ENCODE measurements at regions of chr14 and their contacts with region 1.

Region 1: DNA sequence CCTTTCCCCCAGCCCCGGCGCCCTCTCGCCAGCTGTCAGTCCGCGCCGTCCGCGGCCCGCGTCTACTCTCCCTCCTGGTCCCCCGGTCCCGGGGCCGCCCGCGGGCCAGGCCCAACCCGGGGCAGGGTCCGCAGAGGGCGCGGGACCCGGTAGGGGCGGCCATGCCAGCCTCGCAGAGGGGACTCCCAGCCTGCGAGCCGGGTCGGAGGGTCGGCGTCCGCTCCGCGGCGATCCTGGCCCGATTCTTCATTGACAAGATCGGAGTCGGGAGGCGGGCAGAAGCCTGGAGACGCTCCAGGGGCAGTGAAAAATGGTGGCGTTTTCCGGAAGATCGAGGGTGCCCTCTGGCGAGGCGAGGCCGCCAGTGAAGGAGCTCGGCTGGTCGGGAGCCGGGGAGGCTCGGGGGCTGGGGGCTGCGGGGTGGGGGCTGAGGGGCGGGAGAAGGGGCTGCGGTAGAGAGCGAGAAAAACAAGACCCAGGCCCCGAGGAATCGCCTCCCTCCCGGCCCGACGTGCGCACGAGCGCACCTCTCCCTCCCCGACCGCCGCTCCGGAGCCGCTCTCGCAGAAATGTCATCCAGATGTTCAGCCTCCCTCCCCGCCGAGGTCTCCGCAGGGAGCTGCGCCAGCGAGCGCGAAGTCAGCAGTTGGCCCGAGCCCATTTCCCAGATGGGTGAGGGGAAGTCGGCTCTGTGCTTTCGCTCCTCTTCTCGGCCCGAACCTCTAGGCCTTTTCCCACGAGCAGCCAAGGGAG is 647 bp upstream of the TGFB3 start:
- DNase-seq: peak; percentile 86 to 93
- ATAC-seq: peak; percentile 76 to 79 (median 76)
- H3K4me3 ChIP-seq: peak overlapping the region; percentile 79
- H3K27ac ChIP-seq: peak overlapping the region; percentile 98
- H3K4me1 ChIP-seq: peaks cover 25% of the 10 kb centered on the region
- H3K27me3 ChIP-seq: no peaks in the 10 kb centered on the region
- CTCF ChIP-seq: peak; percentile 56

Region 2: GRCh38 chr14:75188520-75189268 is 793.7 kb before region 1 on chr14:
- intact Hi-C with region 1: no loop called
- DNase-seq: no peak
- ATAC-seq: peak in 1 of 4 donors; percentile 33
- H3K4me3 ChIP-seq: no peak overlapping the region
- H3K27ac ChIP-seq: no peak overlapping the region
- H3K4me1 ChIP-seq: no peaks in the 10 kb centered on the region
- H3K27me3 ChIP-seq: no peaks in the 10 kb centered on the region
- CTCF ChIP-seq: no peak

Region 3: GRCh38 chr14:75660630-75661494 is 321.6 kb before region 1 on chr14 and contains the starts of genes ERG28 and TTLL5:
- intact Hi-C with region 1: loop called in 1 of 2 experiments (anchors 5 kb)
- DNase-seq: peak; percentile 96 to 98
- ATAC-seq: peak; percentile 96 to 97 (median 96)
- H3K4me3 ChIP-seq: peak within 1 kb of the TSS; percentile 93
- H3K27ac ChIP-seq: peak within 1 kb of the TSS; percentile 77
- H3K4me1 ChIP-seq: peaks cover 30% of the 10 kb centered on the region
- H3K27me3 ChIP-seq: no peaks in the 10 kb centered on the region
- CTCF ChIP-seq: no peak
- total RNA-seq, gene ERG28: 3.6 to 6.1 (median 4.8) TPM
- total RNA-seq, gene TTLL5: 5.7 to 17.2 (median 11.0) TPM

Region 4: DNA sequence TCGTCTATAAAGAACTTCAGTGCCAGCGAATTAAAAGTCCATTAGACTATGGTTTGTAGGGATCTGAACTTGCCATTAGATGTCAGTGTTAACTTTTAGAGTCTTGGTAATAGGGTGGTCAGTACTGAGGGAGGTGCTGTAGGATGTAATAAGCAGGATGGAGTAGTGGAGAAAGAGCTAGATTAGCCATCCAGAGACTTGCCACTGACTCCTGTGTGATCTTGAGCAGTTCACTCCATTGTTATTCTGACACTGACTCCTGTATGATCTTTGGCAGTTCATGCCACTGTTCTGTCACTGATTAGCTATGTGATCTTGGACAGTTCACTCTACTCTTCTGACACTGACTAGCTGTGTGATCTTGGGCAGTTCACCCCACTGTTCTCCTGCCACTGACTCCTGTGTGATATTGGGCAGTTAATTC is 187.8 kb before region 1 on chr14:
- intact Hi-C with region 1: loop called in 1 of 2 experiments (anchors 1 kb)
- DNase-seq: no peak
- ATAC-seq: peak; percentile 82 to 92 (median 86)
- H3K4me3 ChIP-seq: no peak overlapping the region
- H3K27ac ChIP-seq: no peak overlapping the region
- H3K4me1 ChIP-seq: no peaks in the 10 kb centered on the region
- H3K27me3 ChIP-seq: no peaks in the 10 kb centered on the region
- CTCF ChIP-seq: peak; percentile 50

Region 5: GRCh38 chr14:75906676-75907280 is 75.7 kb before region 1 on chr14:
- intact Hi-C with region 1: loop called (anchors 1 to 2 kb)
- DNase-seq: peak; percentile 35 to 65
- ATAC-seq: peak; percentile 53 to 81 (median 72)
- H3K4me3 ChIP-seq: no peak overlapping the region
- H3K27ac ChIP-seq: peak overlapping the region; percentile 58
- H3K4me1 ChIP-seq: peaks cover 41% of the 10 kb centered on the region
- H3K27me3 ChIP-seq: no peaks in the 10 kb centered on the region
- CTCF ChIP-seq: peak; percentile 94

Region 6: DNA sequence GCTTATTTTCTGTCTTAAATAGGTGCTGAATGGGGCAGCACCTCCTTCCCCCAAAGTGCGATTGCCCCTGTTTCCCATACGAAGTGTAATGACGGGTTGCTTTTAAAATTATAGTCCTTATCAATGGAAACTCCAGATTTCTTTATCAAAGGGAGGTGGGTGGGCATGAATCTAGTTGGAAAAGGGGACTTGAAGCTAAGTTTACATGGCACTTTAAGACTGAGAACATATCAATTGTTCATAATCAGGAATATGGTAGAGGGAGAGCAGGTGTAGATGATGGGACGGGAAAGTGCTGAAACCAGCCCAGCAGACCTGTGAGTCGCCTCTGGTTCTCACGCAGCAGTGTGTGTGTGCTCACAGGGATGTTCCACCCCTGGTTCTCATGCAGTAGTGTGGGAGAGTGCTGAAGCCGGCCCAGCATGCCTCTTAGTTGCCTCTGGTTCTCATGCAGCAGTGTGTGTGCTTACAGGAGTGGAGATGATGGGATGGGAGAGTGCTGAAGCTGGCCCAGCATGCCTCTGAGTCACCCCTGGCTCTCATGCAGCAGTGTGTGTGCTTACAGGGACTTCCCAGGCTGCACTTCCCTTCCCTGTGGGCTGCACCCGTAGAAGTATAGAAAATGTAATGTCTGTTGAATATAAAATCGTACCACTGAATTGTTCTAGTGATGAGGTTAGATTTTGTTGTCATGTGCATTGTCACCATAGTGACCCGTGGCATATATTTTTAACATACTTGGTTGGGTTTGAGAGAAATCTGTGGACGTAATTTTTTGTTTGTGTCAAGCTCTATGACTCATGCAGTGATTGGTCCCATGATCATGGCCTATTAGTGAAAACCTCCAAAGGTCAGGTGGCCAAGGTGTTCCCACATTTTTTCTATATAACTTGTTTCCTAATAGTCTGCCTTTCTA is 220.9 kb after region 1 on chr14:
- intact Hi-C with region 1: no loop called
- DNase-seq: no peak
- ATAC-seq: peak; percentile 49 to 65 (median 60)
- H3K4me3 ChIP-seq: no peak overlapping the region
- H3K27ac ChIP-seq: no peak overlapping the region
- H3K4me1 ChIP-seq: no peaks in the 10 kb centered on the region
- H3K27me3 ChIP-seq: no peaks in the 10 kb centered on the region
- CTCF ChIP-seq: no peak

Measured in psoas muscle (tissue), 8 donors.